Activated CD4-positive, alpha-beta memory T cell treated with anti-CD3 and anti-CD28 coated beads for 36 hours (primary cell): ENCODE measurements at regions of chr5 and their contacts with region 1.

Region 1: GRCh38 chr5:55364537-55365055 is 56.8 kb downstream of the MTREX start:
- DNase-seq: peak; percentile 40
- H3K4me3 Mint-ChIP-seq: no peak overlapping the region
- H3K27ac Mint-ChIP-seq: peak overlapping the region; percentile 3
- H3K4me1 Mint-ChIP-seq: peaks cover 17% of the 10 kb centered on the region
- H3K27me3 Mint-ChIP-seq: no peaks in the 10 kb centered on the region

Region 2: GRCh38 chr5:55333017-55333416 is 31.6 kb before region 1 on chr5:
- CTCF ChIA-PET with region 1: no interaction called
- POLR2A ChIA-PET with region 1: no interaction called
- intact Hi-C with region 1: loop called (anchors 2 kb)
- DNase-seq: no peak
- H3K4me3 Mint-ChIP-seq: no peak overlapping the region
- H3K27ac Mint-ChIP-seq: no peak overlapping the region
- H3K4me1 Mint-ChIP-seq: peaks cover 21% of the 10 kb centered on the region
- H3K27me3 Mint-ChIP-seq: no peaks in the 10 kb centered on the region

Region 3: GRCh38 chr5:55338810-55339243 is 25.8 kb before region 1 on chr5:
- CTCF ChIA-PET with region 1: interaction called, 4 read pairs
- POLR2A ChIA-PET with region 1: no interaction called
- intact Hi-C with region 1: loop called (anchors 1 kb)
- DNase-seq: peak; percentile 81
- H3K4me3 Mint-ChIP-seq: no peak overlapping the region
- H3K27ac Mint-ChIP-seq: peak overlapping the region; percentile 54
- H3K4me1 Mint-ChIP-seq: peaks cover 21% of the 10 kb centered on the region
- H3K27me3 Mint-ChIP-seq: no peaks in the 10 kb centered on the region

Region 4: GRCh38 chr5:55421074-55421529 is 56.5 kb after region 1 on chr5:
- CTCF ChIA-PET with region 1: interaction called, 3 read pairs
- POLR2A ChIA-PET with region 1: no interaction called
- intact Hi-C with region 1: loop called (anchors 1 kb)
- DNase-seq: peak; percentile 37
- H3K4me3 Mint-ChIP-seq: no peak overlapping the region
- H3K27ac Mint-ChIP-seq: peak overlapping the region; percentile 15
- H3K4me1 Mint-ChIP-seq: peaks cover 34% of the 10 kb centered on the region
- H3K27me3 Mint-ChIP-seq: no peaks in the 10 kb centered on the region

Region 5: DNA sequence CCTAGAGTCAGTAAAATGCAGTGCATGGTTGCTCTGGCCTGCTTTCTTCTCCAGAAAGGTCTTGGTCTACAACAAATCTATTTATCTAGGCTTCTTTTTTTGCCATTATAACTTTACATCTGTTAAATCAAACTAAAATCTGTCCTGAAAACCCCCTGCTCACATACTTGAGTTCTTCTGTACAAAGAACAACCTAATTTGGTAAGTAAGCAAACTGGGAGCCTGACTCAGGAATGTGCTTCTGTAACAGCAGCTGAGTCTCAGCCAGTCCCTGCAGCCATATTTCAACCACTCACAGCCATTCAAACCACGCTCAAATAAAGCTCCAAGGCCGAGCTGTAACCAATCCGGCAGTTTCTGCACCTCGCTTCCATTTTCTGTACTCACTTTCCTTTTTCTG is 74.4 kb after region 1 on chr5:
- CTCF ChIA-PET with region 1: no interaction called
- POLR2A ChIA-PET with region 1: no interaction called
- intact Hi-C with region 1: loop called (anchors 1 kb)
- DNase-seq: no peak
- H3K4me3 Mint-ChIP-seq: no peak overlapping the region
- H3K27ac Mint-ChIP-seq: no peak overlapping the region
- H3K4me1 Mint-ChIP-seq: peaks cover 44% of the 10 kb centered on the region
- H3K27me3 Mint-ChIP-seq: no peaks in the 10 kb centered on the region

Region 6: DNA sequence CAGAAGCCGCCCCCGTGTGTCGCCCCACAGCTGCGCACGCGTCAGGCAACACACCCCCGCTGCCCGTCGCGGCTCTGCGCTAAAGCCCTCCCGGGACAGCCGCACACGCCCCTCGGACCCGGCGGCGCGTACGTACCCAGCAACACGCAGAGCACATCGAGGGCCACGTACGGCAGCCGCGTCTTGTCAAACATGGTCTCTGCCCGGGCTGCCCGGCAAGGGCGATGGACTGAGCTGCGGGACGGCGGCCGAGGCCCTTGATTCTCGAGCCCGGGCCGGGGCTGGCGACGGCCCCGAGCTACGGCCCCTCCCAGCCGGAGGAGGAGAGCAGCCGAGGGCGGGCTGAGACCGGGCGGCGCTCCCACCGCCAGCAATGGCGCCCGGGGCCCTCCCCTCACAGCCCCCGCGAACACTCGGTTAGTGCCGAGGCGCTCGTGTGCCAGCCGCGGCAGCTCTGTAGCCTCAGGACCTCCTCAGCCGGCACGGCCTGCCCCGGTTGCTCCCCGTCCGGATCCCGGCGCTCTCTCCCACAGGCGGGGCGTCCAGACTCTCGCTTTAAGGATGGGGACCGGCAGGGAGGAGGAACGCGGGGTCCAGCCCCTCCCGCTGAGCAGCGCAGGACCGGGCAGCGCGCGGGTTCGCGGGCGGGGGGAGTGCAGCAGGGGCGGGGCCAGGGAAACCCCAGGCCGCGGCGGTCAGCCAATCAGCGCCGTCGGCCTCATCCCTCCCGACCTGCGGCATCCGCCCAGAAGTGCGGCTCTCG is 170.0 kb after region 1 on chr5 and contains the start of gene PLPP1:
- CTCF ChIA-PET with region 1: no interaction called
- POLR2A ChIA-PET with region 1: no interaction called
- intact Hi-C with region 1: loop called (anchors 1 kb)
- DNase-seq: peak; percentile 89
- H3K4me3 Mint-ChIP-seq: peak within 1 kb of the TSS; percentile 85
- H3K27ac Mint-ChIP-seq: peak within 1 kb of the TSS; percentile 77
- H3K4me1 Mint-ChIP-seq: peaks cover 24% of the 10 kb centered on the region
- H3K27me3 Mint-ChIP-seq: no peaks in the 10 kb centered on the region
- total RNA-seq, gene PLPP1: 6.7 to 7.2 TPM

Region 7: GRCh38 chr5:55758231-55758630 is 393.6 kb after region 1 on chr5:
- CTCF ChIA-PET with region 1: no interaction called
- POLR2A ChIA-PET with region 1: no interaction called
- intact Hi-C with region 1: loop called (anchors 1 kb)
- DNase-seq: no peak
- H3K4me3 Mint-ChIP-seq: no peak overlapping the region
- H3K27ac Mint-ChIP-seq: peak overlapping the region; percentile 23
- H3K4me1 Mint-ChIP-seq: peaks cover 20% of the 10 kb centered on the region
- H3K27me3 Mint-ChIP-seq: peaks cover 17% of the 10 kb centered on the region